Activated CD4-positive, alpha-beta memory T cell treated with anti-CD3 and anti-CD28 coated beads for 36 hours (primary cell): ENCODE measurements at regions of chr5 and their contacts with region 1.

Region 1: GRCh38 chr5:180860887-180861822 is at the start of gene ZFP62:
- DNase-seq: peak; percentile 91
- H3K4me3 Mint-ChIP-seq: peak within 1 kb of the TSS; percentile 92
- H3K27ac Mint-ChIP-seq: peak within 1 kb of the TSS; percentile 92
- H3K4me1 Mint-ChIP-seq: peaks cover 15% of the 10 kb centered on the region
- H3K27me3 Mint-ChIP-seq: no peaks in the 10 kb centered on the region
- total RNA-seq, gene ZFP62: 17.9 to 20.5 TPM

Region 2: DNA sequence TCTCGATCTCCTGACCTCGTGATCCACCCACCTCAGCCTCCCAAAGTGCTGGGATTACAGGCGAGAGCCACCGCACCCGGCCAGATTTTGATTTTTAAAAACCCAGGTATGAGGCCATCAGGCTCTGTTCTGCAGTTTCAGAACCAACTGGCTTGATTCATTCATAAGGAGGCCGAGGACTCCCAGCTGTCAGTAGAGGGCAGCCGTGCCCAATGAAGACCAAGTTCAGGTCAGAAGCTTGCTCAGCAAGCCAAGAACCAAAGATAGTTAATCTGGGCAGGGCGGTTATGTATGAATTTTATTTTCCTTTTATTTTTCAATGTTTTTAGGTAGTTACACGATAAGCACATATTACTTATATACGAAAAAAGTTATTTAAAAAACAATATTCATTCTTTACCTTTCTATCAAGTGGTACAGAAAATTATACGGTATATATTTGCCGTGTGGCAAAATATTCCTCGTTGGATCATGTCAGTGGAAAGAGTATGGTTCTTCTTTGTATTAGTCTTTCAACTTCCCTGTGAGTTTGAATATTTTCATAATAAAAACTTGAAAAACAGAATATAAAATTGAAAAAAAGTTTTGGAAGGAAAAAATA is 76.6 kb before region 1 on chr5:
- CTCF ChIA-PET with region 1: interaction called, 10 read pairs
- POLR2A ChIA-PET with region 1: interaction called, 3 read pairs
- intact Hi-C with region 1: no loop called
- DNase-seq: peak; percentile 83
- H3K4me3 Mint-ChIP-seq: no peak overlapping the region
- H3K27ac Mint-ChIP-seq: no peak overlapping the region
- H3K4me1 Mint-ChIP-seq: peaks cover 10% of the 10 kb centered on the region
- H3K27me3 Mint-ChIP-seq: no peaks in the 10 kb centered on the region

Region 3: DNA sequence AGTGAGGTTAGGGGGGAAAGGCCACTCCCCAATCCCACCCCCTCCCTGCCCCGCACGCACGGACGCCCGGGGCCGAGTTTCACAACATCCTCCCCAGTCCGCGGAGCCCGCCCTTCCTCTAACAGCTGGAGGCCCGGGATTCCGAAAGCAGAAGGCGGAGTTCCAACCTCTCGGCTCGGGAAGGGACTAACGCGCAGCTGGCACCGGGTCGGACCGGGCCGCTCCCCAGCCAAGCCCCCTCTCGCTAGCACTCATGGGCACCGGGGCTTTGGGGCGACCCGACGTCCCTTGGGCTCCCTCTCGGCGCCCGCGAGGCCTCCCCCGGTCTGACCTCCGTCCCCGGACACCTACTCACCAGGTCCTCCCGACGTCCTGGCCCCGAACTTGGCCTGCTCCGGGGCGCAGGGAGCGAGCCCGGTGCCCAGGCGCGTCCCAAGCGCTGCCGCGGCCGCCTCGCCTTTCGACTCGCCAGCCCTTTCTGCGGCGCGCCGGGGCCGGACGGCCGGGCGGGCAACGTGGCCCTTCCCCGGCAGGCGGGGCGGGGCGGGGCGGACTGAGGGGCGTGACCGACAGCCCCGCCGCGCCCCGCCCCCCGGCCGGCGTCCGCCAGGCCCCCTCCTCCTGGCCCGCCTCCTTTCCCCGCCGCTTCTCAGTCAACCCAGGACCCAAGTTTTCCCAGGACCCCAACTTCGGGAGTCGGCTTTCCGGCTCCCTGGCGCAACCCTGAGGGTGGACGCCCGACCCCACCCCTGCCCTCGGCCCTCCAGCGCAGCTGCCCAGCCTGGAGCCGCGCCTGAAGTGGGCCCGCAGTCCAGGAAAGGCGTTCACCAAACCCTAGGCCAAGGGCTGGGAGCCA is 58.6 kb before region 1 on chr5 and contains the start of gene MGAT1:
- CTCF ChIA-PET with region 1: interaction called, 5 read pairs
- POLR2A ChIA-PET with region 1: interaction called, 6 read pairs
- intact Hi-C with region 1: loop called (anchors 2 kb)
- DNase-seq: peak; percentile 84
- H3K4me3 Mint-ChIP-seq: peak within 1 kb of the TSS; percentile 85
- H3K27ac Mint-ChIP-seq: peak within 1 kb of the TSS; percentile 96
- H3K4me1 Mint-ChIP-seq: peaks cover 75% of the 10 kb centered on the region
- H3K27me3 Mint-ChIP-seq: no peaks in the 10 kb centered on the region
- total RNA-seq, gene MGAT1: 101 to 106 TPM

Region 4: DNA sequence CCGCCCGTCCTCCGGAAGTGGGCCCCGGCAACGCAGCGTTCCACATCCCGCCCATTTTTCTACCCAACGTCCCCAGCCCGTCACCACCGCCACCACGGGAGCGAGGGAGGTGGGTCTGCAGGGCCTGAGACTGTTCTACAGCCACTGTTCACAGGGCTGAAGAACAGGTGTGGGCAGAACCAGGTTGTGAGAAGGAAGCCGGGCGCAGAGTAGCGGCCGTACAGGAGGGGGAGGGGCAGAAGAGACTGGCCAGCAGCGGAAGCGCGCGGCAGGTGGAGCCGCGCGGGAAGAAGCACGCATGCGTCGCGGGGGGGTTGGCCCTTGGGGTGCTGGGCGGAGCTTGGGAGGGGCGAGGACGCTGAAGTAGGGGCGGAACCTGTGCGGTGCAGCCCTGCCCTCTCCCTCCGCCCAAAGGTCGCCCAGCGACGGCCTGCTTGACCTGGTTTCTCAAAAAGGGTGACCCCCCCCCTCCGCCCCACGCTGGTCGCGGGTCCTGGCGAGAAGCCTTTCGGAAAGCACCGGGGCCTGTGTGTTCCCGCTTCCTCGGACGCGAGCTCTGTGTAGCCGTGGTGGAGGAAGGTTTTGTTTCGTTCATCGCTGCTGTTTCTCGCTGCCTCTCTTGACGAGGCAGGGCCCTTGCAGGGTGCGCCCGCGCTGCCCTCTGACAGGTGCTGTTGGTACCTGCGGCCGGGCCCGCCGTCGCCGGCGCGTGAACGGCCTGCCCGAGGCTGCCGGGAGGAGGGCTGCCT is 50.8 kb before region 1 on chr5:
- CTCF ChIA-PET with region 1: no interaction called
- POLR2A ChIA-PET with region 1: interaction called, 6 read pairs
- intact Hi-C with region 1: loop called (anchors 1 kb)
- DNase-seq: peak; percentile 97
- H3K4me3 Mint-ChIP-seq: peak overlapping the region; percentile 94
- H3K27ac Mint-ChIP-seq: peak overlapping the region; percentile 99
- H3K4me1 Mint-ChIP-seq: peaks cover 69% of the 10 kb centered on the region
- H3K27me3 Mint-ChIP-seq: no peaks in the 10 kb centered on the region

Region 5: GRCh38 chr5:180831139-180832048 is 29.8 kb before region 1 on chr5:
- CTCF ChIA-PET with region 1: interaction called, 5 read pairs
- POLR2A ChIA-PET with region 1: interaction called, 26 read pairs
- intact Hi-C with region 1: loop called (anchors 1 kb)
- DNase-seq: peak; percentile 86
- H3K4me3 Mint-ChIP-seq: peak overlapping the region; percentile 99
- H3K27ac Mint-ChIP-seq: peak overlapping the region; percentile 99
- H3K4me1 Mint-ChIP-seq: peaks cover 39% of the 10 kb centered on the region
- H3K27me3 Mint-ChIP-seq: no peaks in the 10 kb centered on the region

Region 6: GRCh38 chr5:180950291-180950949 is 89.3 kb after region 1 on chr5:
- CTCF ChIA-PET with region 1: no interaction called
- POLR2A ChIA-PET with region 1: no interaction called
- intact Hi-C with region 1: no loop called
- DNase-seq: no peak
- H3K4me3 Mint-ChIP-seq: no peak overlapping the region
- H3K27ac Mint-ChIP-seq: no peak overlapping the region
- H3K4me1 Mint-ChIP-seq: no peaks in the 10 kb centered on the region
- H3K27me3 Mint-ChIP-seq: no peaks in the 10 kb centered on the region

Region 7: GRCh38 chr5:181052672-181053487 is 191.7 kb after region 1 on chr5:
- CTCF ChIA-PET with region 1: no interaction called
- POLR2A ChIA-PET with region 1: no interaction called
- intact Hi-C with region 1: loop called (anchors 10 kb)
- DNase-seq: peak; percentile 24
- H3K4me3 Mint-ChIP-seq: peak overlapping the region; percentile 63
- H3K27ac Mint-ChIP-seq: no peak overlapping the region
- H3K4me1 Mint-ChIP-seq: peaks cover 10% of the 10 kb centered on the region
- H3K27me3 Mint-ChIP-seq: peaks cover 70% of the 10 kb centered on the region

Region 8: GRCh38 chr5:181159286-181159829 is 298.2 kb after region 1 on chr5:
- CTCF ChIA-PET with region 1: no interaction called
- POLR2A ChIA-PET with region 1: no interaction called
- intact Hi-C with region 1: loop called (anchors 1 kb)
- DNase-seq: peak; percentile 96
- H3K4me3 Mint-ChIP-seq: peak overlapping the region; percentile 36
- H3K27ac Mint-ChIP-seq: peak overlapping the region; percentile 72
- H3K4me1 Mint-ChIP-seq: peaks cover 33% of the 10 kb centered on the region
- H3K27me3 Mint-ChIP-seq: peaks cover 17% of the 10 kb centered on the region